Activated CD4-positive, alpha-beta T cell treated with anti-CD3 and anti-CD28 coated beads, Interleukin-2, amount 10 ng/mL, durations not matched to agents 24 days and 14 days (primary cell): ENCODE measurements at regions of chr9 and their contacts with region 1.

Region 1: GRCh38 chr9:133375724-133376654 is at the starts of genes STKLD1 and SURF4:
- DNase-seq: peak; percentile 100
- H3K4me3 Mint-ChIP-seq: peak within 1 kb of the TSS; percentile 99
- H3K27ac Mint-ChIP-seq: peak within 1 kb of the TSS; percentile 97
- H3K4me1 Mint-ChIP-seq: peaks cover 42% of the 10 kb centered on the region
- H3K27me3 Mint-ChIP-seq: peaks cover 7% of the 10 kb centered on the region
- total RNA-seq, gene STKLD1: 0.16 and 0.33 TPM in 2 replicates
- total RNA-seq, gene SURF4: 235 and 240 TPM in 2 replicates

Region 2: GRCh38 chr9:133149126-133150107 is 226.6 kb before region 1 on chr9:
- intact Hi-C with region 1: loop called (anchors 5 kb)
- DNase-seq: peak; percentile 94
- H3K4me3 Mint-ChIP-seq: peak overlapping the region; percentile 78
- H3K27ac Mint-ChIP-seq: peak overlapping the region; percentile 82
- H3K4me1 Mint-ChIP-seq: peaks cover 29% of the 10 kb centered on the region
- H3K27me3 Mint-ChIP-seq: no peaks in the 10 kb centered on the region

Region 3: GRCh38 chr9:133335878-133336811 is 39.8 kb before region 1 on chr9 and contains the start of gene SURF6:
- intact Hi-C with region 1: loop called (anchors 1 kb)
- DNase-seq: peak; percentile 99
- H3K4me3 Mint-ChIP-seq: peak within 1 kb of the TSS; percentile 89
- H3K27ac Mint-ChIP-seq: peak within 1 kb of the TSS; percentile 90
- H3K4me1 Mint-ChIP-seq: peaks cover 18% of the 10 kb centered on the region
- H3K27me3 Mint-ChIP-seq: no peaks in the 10 kb centered on the region
- total RNA-seq, gene SURF6: 27.4 and 28.8 TPM in 2 replicates

Region 4: DNA sequence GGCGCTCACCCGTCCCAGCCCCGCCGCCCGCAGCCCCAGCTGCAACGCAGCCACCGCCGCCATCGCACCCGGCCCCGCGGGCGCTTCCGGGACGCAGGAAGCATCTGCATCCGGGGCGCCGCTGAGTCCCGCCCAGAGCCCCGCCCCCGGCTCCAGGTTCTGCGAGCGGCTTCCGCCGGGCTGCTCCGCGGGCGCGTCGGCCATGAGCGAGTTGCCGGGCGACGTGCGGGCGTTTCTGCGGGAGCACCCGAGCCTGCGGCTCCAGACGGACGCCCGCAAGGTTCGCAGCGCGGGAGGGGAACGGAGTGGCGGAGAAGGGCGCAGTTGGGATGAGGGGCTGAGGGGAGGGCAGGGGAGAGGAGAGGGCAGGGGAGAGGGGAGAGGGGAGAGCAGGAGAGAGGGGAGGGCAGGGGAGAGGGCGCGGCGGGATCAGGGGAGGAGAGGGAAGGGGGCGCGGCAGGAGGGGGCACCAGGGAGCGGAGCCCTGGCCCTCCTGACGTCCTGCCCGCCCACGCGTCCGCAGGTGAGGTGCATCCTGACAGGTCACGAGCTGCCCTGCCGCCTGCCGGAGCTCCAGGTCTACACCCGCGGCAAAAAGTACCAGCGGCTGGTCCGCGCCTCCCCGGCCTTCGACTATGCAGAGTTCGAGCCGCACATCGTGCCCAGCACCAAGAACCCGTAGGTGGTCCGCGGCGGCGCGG is 19.4 kb before region 1 on chr9 and contains the starts of genes SURF1 and SURF2:
- intact Hi-C with region 1: loop called (anchors 1 kb)
- DNase-seq: peak; percentile 97
- H3K4me3 Mint-ChIP-seq: peak within 1 kb of the TSS; percentile 92
- H3K27ac Mint-ChIP-seq: peak within 1 kb of the TSS; percentile 84
- H3K4me1 Mint-ChIP-seq: peaks cover 42% of the 10 kb centered on the region
- H3K27me3 Mint-ChIP-seq: no peaks in the 10 kb centered on the region
- total RNA-seq, gene SURF1: 29.8 and 33.2 TPM in 2 replicates
- total RNA-seq, gene SURF2: 28.5 and 29.3 TPM in 2 replicates

Region 5: GRCh38 chr9:133459476-133460404 is 83.8 kb after region 1 on chr9 and contains the start of gene CACFD1:
- intact Hi-C with region 1: loop called (anchors 1 kb)
- DNase-seq: peak; percentile 96
- H3K4me3 Mint-ChIP-seq: peak within 1 kb of the TSS; percentile 95
- H3K27ac Mint-ChIP-seq: peak within 1 kb of the TSS; percentile 87
- H3K4me1 Mint-ChIP-seq: peaks cover 6% of the 10 kb centered on the region
- H3K27me3 Mint-ChIP-seq: peaks cover 14% of the 10 kb centered on the region
- total RNA-seq, gene CACFD1: 0.40 and 0.70 TPM in 2 replicates

Region 6: GRCh38 chr9:133470427-133470924 is 94.5 kb after region 1 on chr9:
- intact Hi-C with region 1: no loop called
- DNase-seq: no peak
- H3K4me3 Mint-ChIP-seq: no peak overlapping the region
- H3K27ac Mint-ChIP-seq: no peak overlapping the region
- H3K4me1 Mint-ChIP-seq: no peaks in the 10 kb centered on the region
- H3K27me3 Mint-ChIP-seq: peaks cover 2% of the 10 kb centered on the region